ENCODE measurements at regions of chr7 and their contacts with region 1.

Region 1: GRCh38 chr7:151876899-151877777 is at the start of gene PRKAG2:
- DNase-seq: peak; percentile 67 to 84 (median 77)
- H3K4me3 ChIP-seq: peak within 1 kb of the TSS; percentile 84
- H3K27ac ChIP-seq: peak within 1 kb of the TSS; percentile 97 to 99
- H3K4me1 ChIP-seq: peaks cover 5% of the 10 kb centered on the region
- H3K27me3 ChIP-seq: no peaks in the 10 kb centered on the region
- CTCF ChIP-seq: peak in 2 of 3 donors; percentile 8 to 17
- EP300 ChIP-seq: no peak
- POLR2A ChIP-seq: peak; percentile 26
- total RNA-seq, gene PRKAG2: 9.3 to 37.7 (median 22.6) TPM

Region 2: GRCh38 chr7:151936207-151936606 is 59.1 kb after region 1 on chr7:
- intact Hi-C with region 1: no loop called
- DNase-seq: no peak
- H3K4me3 ChIP-seq: no peak overlapping the region
- H3K27ac ChIP-seq: no peak overlapping the region
- H3K4me1 ChIP-seq: no peaks in the 10 kb centered on the region
- H3K27me3 ChIP-seq: no peaks in the 10 kb centered on the region
- CTCF ChIP-seq: no peak
- EP300 ChIP-seq: no peak
- POLR2A ChIP-seq: no peak

Region 3: GRCh38 chr7:152025077-152025936 is 148.2 kb after region 1 on chr7 and contains the start of gene GALNT11:
- intact Hi-C with region 1: loop called in 1 of 4 experiments (anchors 10 kb)
- DNase-seq: peak; percentile 79 to 92 (median 88)
- H3K4me3 ChIP-seq: peak within 1 kb of the TSS; percentile 44
- H3K27ac ChIP-seq: peak within 1 kb of the TSS; percentile 70 to 79
- H3K4me1 ChIP-seq: peaks cover 3% of the 10 kb centered on the region
- H3K27me3 ChIP-seq: no peaks in the 10 kb centered on the region
- CTCF ChIP-seq: peak in 2 of 3 donors; percentile 40 to 57
- EP300 ChIP-seq: no peak
- POLR2A ChIP-seq: peak; percentile 89
- total RNA-seq, gene GALNT11: 20.1 to 39.8 (median 34.3) TPM

Region 4: DNA sequence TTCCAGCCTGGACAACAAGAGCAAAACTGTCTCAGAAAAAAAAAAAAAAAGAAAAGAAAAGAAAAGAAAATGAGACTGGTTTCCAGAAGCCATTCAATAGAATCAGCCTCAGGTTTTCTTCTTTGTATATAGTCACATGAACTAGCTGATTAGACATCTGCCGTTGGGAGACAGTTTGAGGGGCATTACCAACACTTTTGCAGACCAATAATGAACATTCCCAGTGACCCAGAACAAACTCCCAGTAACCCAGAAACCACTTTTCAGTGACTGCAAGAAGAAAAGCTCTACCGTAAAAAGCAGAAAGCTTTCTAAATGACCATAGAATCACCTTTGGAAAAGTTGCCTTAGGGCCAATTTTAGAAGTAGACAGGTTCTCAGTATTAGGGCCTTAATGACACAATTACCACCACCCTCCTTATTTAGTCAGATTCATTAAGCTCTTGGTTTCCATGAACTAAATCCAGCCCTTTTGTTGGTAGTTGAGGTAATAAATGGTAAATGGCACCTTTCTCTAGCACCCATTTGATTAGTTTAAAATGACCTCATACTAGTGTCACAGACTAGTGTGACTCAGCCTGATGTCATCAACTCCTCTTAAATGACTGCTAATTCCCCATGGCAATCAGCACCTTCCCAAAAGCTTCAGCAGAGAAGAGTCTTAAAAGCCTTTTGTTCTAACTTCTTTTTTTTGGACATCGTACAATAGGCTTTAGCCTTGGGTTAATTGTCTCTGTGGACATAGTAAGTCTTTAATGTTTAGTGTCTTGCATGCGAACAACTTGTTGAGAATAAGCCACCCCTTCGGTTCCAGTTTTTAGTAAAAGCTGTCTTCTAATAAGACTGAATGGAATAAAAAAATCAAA is 832.4 kb after region 1 on chr7:
- intact Hi-C with region 1: no loop called
- DNase-seq: no peak
- H3K4me3 ChIP-seq: no peak overlapping the region
- H3K27ac ChIP-seq: no peak overlapping the region
- H3K4me1 ChIP-seq: no peaks in the 10 kb centered on the region
- H3K27me3 ChIP-seq: no peaks in the 10 kb centered on the region
- CTCF ChIP-seq: no peak
- EP300 ChIP-seq: no peak
- POLR2A ChIP-seq: no peak